Heart right ventricle (tissue), 16 donors: ENCODE measurements at regions of chr1 and their contacts with region 1.

Region 1: GRCh38 chr1:247210376-247211117 is 38.7 kb upstream of the ZNF124 start:
- DNase-seq: peak; percentile 98
- ATAC-seq: peak; percentile 100
- H3K4me3 ChIP-seq: peak overlapping the region; percentile 72 to 96 (median 92)
- H3K27ac ChIP-seq: peak overlapping the region; percentile 89 to 97 (median 92)
- H3K4me1 ChIP-seq: peaks cover 0 to 36% (median 21%) of the 10 kb centered on the region in 9 donors
- H3K27me3 ChIP-seq: no peaks in the 10 kb centered on the region
- CTCF ChIP-seq: no peak

Region 2: GRCh38 chr1:247078261-247079140 is 132.0 kb before region 1 on chr1 and contains the start of gene ZNF670:
- intact Hi-C with region 1: loop called in 1 of 10 experiments (anchors 5 kb)
- DNase-seq: peak; percentile 94 to 96
- ATAC-seq: peak; percentile 99 to 100 (median 100)
- H3K4me3 ChIP-seq: peak within 1 kb of the TSS; percentile 78 to 95 (median 91)
- H3K27ac ChIP-seq: peak within 1 kb of the TSS in 9 of 10 donors; percentile 73 to 89 (median 77)
- H3K4me1 ChIP-seq: peaks cover 0 to 21% (median 13%) of the 10 kb centered on the region in 9 donors
- H3K27me3 ChIP-seq: no peaks in the 10 kb centered on the region
- CTCF ChIP-seq: peak in 1 of 9 donors; percentile 14
- total RNA-seq, gene ZNF670: 0.42 to 1.6 (median 1.3) TPM

Region 3: DNA sequence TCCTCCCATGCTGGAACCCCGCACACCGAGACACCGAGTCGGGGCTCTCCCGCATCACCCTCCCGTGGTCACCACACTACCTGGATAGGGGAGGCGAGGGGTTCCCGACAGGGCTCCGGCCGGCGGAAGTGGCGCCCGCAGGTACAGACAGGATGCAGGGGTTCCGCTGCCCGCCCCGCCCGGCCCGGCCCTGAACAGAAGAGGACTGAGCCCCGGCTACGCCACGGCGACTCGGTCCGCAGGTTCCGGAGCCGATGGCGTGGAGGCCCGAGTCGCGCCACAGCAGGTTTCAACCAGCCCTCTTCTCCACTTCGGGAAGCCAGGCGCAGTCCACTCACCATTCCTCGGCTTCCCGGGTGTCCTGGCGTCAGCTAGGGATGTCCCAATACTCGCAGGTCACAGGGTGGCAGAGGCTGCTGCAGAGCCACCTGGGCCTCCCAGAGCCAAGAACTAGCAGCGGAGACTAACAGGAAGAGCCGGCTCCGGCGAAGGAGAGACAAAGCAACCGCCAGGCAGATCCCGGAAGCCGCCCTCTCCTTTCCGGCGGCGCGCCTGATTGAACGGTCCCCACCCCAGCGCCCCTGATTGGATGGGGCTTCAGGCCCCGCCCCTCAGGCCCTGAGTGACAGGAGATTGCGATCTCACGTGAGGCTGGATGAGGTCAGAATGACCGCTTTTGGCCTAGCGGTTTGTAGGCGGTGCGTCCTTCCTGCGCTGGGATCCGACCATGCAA is 106.5 kb before region 1 on chr1 and contains the start of gene ZNF669:
- intact Hi-C with region 1: loop called in 1 of 10 experiments (anchors 2 kb)
- DNase-seq: peak; percentile 97
- ATAC-seq: peak; percentile 100
- H3K4me3 ChIP-seq: peak within 1 kb of the TSS; percentile 64 to 95 (median 90)
- H3K27ac ChIP-seq: peak within 1 kb of the TSS in 9 of 10 donors; percentile 76 to 91 (median 84)
- H3K4me1 ChIP-seq: peaks cover 0 to 21% (median 14%) of the 10 kb centered on the region in 9 donors
- H3K27me3 ChIP-seq: no peaks in the 10 kb centered on the region
- CTCF ChIP-seq: no peak
- total RNA-seq, gene ZNF669: 2.1 to 4.7 (median 3.5) TPM

Region 4: DNA sequence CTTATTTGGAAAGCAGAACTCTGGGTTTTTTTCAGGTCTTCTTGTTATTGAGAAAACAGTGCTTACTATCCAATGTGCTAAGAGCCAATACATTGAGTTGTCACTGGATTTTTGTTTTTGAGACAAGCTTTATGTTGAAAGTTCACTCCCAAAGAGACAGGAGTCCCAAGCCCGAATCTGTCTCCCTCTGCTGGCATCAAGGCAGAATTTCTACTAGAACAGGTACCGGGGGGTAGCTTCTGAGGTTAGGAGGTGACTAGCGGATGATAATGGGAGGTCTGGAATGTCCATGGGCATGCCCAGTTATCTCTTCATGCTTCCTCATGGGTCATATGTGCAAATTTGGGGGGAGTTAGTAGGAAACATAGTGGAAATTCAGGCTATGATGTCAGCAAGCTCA is 63.9 kb before region 1 on chr1:
- intact Hi-C with region 1: no loop called
- DNase-seq: no peak
- ATAC-seq: no peak
- H3K4me3 ChIP-seq: no peak overlapping the region
- H3K27ac ChIP-seq: no peak overlapping the region
- H3K4me1 ChIP-seq: no peaks in the 10 kb centered on the region
- H3K27me3 ChIP-seq: no peaks in the 10 kb centered on the region
- CTCF ChIP-seq: no peak

Region 5: DNA sequence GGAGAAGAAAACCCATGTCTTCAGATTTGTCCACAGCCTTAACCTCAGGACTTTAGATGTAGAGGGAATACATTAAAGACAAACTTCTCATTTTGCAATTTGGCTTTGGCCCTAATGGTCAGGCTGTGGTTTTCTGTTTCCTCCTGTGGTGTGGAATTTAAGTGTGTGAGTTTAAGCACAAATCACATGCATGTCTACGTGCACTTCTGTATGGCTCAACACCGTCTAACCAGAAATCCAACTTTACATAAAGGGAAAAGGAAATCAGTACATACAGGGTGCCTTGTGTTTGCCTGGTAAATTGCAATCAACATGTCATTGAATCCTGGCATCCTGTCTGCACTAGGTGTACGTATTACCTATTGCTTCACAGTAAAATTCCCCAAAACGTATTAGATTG is 37.6 kb before region 1 on chr1:
- intact Hi-C with region 1: loop called in 1 of 10 experiments (anchors 2 kb)
- DNase-seq: no peak
- ATAC-seq: no peak
- H3K4me3 ChIP-seq: no peak overlapping the region
- H3K27ac ChIP-seq: no peak overlapping the region
- H3K4me1 ChIP-seq: peaks cover 0 to 16% (median 0%) of the 10 kb centered on the region in 9 donors
- H3K27me3 ChIP-seq: no peaks in the 10 kb centered on the region
- CTCF ChIP-seq: no peak

Region 6: GRCh38 chr1:247331172-247331991 is 120.8 kb after region 1 on chr1 and contains the start of gene ZNF496:
- intact Hi-C with region 1: loop called in 2 of 10 experiments (anchors 10 kb)
- DNase-seq: peak; percentile 83 to 86
- ATAC-seq: peak; percentile 72 to 87 (median 82)
- H3K4me3 ChIP-seq: peak within 1 kb of the TSS; percentile 69 to 98 (median 94)
- H3K27ac ChIP-seq: peak within 1 kb of the TSS; percentile 59 to 97 (median 94)
- H3K4me1 ChIP-seq: peaks cover 5 to 58% (median 40%) of the 10 kb centered on the region in 9 donors
- H3K27me3 ChIP-seq: no peaks in the 10 kb centered on the region
- CTCF ChIP-seq: no peak
- total RNA-seq, gene ZNF496: 11.4 to 18.4 (median 14.5) TPM